A673 (cell line): ENCODE measurements at regions of chr11 and their contacts with region 1.

Region 1: DNA sequence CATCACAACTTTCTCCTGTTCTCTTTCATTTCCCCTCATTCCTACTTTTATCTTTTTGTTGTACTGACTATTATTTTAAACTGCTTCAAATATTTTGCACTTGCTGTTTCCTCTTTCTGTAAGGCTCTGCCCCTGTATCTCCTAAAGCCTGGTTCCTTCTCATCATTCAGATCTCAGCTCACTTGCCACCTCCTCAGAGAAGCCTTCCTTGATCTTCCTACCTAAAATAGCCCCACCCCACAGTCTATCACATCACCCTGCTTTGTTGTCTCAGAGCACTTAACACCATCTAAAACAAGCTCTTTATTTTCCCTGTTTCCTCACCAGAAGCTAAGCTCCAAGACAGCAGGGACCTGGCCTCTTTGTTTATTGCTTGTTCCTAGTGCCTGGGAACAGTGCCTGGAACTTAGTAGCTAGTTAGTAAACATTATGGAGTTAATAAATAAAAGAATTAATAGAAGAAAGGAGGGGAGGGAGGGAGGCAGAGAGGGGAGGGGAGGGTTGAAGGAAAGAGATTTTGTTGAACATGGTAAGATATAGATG is 2.5 kb upstream of the STK33 start:
- DNase-seq: no peak
- H3K4me3 ChIP-seq: no peak overlapping the region
- H3K27ac ChIP-seq: no peak overlapping the region
- H3K4me1 ChIP-seq: no peaks in the 10 kb centered on the region
- H3K27me3 ChIP-seq: peaks cover 69% of the 10 kb centered on the region
- CTCF ChIP-seq: no peak

Region 2: GRCh38 chr11:8426076-8426475 is 170.5 kb before region 1 on chr11:
- CTCF ChIA-PET with region 1: no interaction called
- POLR2A ChIA-PET with region 1: interaction called, 12 read pairs
- intact Hi-C with region 1: no loop called
- DNase-seq: no peak
- H3K4me3 ChIP-seq: no peak overlapping the region
- H3K27ac ChIP-seq: no peak overlapping the region
- H3K4me1 ChIP-seq: no peaks in the 10 kb centered on the region
- H3K27me3 ChIP-seq: peaks cover 40% of the 10 kb centered on the region
- CTCF ChIP-seq: no peak

Region 3: GRCh38 chr11:8671193-8671612 is 74.6 kb after region 1 on chr11:
- CTCF ChIA-PET with region 1: no interaction called
- POLR2A ChIA-PET with region 1: no interaction called
- intact Hi-C with region 1: no loop called
- DNase-seq: peak; percentile 97
- H3K4me3 ChIP-seq: peak overlapping the region; percentile 23
- H3K27ac ChIP-seq: peak overlapping the region; percentile 88
- H3K4me1 ChIP-seq: peaks cover 32% of the 10 kb centered on the region
- H3K27me3 ChIP-seq: no peaks in the 10 kb centered on the region
- CTCF ChIP-seq: no peak